ENCODE measurements at regions of chr16 and their contacts with region 1.

Region 1: DNA sequence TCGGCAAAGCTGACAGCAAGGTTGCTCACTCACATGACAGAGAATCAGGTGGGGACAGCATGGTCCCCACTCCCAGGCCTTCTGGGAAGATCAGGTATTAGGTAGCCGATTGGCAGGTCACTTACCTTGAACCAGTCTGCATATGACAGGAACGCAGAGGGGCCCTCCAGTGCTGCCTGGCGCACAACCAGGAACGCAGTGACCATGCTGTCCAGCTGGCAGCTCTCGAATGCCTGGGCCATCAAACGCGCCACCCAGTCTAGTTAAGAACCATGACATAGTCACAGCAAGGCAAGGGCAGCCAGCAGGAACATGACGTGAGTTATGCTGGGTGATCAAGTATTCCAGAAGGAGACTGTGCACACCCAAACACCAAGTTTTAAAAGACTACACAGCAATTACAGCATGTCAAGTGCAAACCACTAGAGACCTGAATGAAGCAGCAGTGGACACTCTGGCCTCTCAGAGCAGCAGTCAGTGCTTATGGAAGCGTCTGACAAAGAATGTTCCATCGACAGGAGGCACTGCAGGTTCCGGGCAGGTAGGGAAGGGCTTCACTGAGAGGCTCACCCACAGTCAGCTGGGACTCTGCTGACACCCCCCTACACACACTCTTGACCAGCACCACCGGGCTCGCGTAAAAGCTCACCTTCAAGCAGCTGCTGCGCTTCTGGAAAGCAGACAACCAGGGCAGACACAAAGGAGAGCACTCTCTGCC is 25.0 kb downstream of the FANCA start:
- DNase-seq: no peak
- ATAC-seq: no peak
- H3K4me3 ChIP-seq: no peak overlapping the region
- H3K27ac ChIP-seq: no peak overlapping the region
- H3K4me1 ChIP-seq: no peaks in the 10 kb centered on the region
- H3K27me3 ChIP-seq: no peaks in the 10 kb centered on the region
- CTCF ChIP-seq: no peak
- EP300 ChIP-seq: no peak
- POLR2A ChIP-seq: no peak
- RAD21 ChIP-seq: no peak

Region 2: GRCh38 chr16:89615596-89616090 is 175.8 kb before region 1 on chr16:
- CTCF ChIA-PET with region 1: no interaction called
- POLR2A ChIA-PET with region 1: no interaction called
- RAD21 ChIA-PET with region 1: no interaction called
- SMC1A ChIA-PET with region 1: no interaction called
- in situ Hi-C with region 1: no loop called
- intact Hi-C with region 1: no loop called
- DNase-seq: no peak
- ATAC-seq: peak; percentile 76
- H3K4me3 ChIP-seq: no peak overlapping the region
- H3K27ac ChIP-seq: no peak overlapping the region
- H3K4me1 ChIP-seq: no peaks in the 10 kb centered on the region
- H3K27me3 ChIP-seq: no peaks in the 10 kb centered on the region
- CTCF ChIP-seq: peak; percentile 39 to 73 (median 53)
- EP300 ChIP-seq: no peak
- POLR2A ChIP-seq: no peak
- RAD21 ChIP-seq: 0 out of 2 replicates have a peak, but pooled peaks have one; percentile 23

Region 3: DNA sequence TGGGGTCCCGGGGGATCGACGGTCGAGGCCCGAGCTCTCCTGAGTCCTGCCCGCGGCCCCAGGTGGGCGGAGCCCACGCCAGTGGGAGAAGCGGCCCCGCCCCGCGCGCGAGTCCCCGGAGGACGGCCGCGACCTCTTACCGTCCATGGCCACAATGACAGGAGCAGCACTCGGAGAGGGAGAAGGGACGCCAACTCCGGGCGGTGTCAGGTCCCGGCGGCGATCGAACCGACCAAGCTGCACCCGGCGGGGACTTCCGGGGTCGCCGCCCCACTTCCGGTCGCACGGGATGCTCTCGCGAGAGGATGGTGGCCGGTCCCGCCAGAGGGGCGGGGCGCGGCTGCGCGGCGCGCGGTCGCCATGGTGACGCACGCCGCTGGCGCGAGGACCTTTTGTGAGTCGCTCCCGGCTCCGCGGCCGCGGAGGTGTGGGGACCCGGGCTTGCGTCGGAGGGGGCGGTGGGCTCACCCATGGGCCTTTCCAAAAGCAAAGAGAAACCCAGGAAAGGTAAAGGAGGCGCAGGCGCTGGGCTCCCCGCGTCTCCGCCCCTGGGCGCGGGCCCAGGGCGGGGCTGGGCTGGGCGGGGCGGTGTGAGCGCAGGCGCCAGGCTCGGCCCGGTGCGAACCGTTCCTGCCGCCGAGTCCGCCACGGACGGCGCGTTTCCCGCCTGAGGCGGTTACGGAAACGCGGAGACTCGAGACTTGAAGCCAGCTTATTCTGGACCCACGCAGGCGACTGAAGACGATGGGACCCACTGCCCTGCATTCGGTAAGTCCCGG is 133.8 kb before region 1 on chr16 and contains the starts of genes CHMP1A and SPATA33:
- CTCF ChIA-PET with region 1: no interaction called
- POLR2A ChIA-PET with region 1: no interaction called
- RAD21 ChIA-PET with region 1: no interaction called
- SMC1A ChIA-PET with region 1: no interaction called
- in situ Hi-C with region 1: no loop called
- intact Hi-C with region 1: no loop called
- DNase-seq: peak; percentile 45
- ATAC-seq: peak; percentile 97
- H3K4me3 ChIP-seq: peak within 1 kb of the TSS; percentile 97
- H3K27ac ChIP-seq: peak within 1 kb of the TSS; percentile 88
- H3K4me1 ChIP-seq: peaks cover 14% of the 10 kb centered on the region
- H3K27me3 ChIP-seq: no peaks in the 10 kb centered on the region
- CTCF ChIP-seq: no peak
- EP300 ChIP-seq: 0 out of 4 replicates have a peak, but pooled peaks of 1 of the 2 experiments have one; percentile 22
- POLR2A ChIP-seq: peak; percentile 98
- RAD21 ChIP-seq: no peak
- polyA plus RNA-seq, gene CHMP1A: 1.0 to 3.8 TPM
- polyA plus RNA-seq, gene SPATA33: 1.1 to 2.9 TPM

Region 4: DNA sequence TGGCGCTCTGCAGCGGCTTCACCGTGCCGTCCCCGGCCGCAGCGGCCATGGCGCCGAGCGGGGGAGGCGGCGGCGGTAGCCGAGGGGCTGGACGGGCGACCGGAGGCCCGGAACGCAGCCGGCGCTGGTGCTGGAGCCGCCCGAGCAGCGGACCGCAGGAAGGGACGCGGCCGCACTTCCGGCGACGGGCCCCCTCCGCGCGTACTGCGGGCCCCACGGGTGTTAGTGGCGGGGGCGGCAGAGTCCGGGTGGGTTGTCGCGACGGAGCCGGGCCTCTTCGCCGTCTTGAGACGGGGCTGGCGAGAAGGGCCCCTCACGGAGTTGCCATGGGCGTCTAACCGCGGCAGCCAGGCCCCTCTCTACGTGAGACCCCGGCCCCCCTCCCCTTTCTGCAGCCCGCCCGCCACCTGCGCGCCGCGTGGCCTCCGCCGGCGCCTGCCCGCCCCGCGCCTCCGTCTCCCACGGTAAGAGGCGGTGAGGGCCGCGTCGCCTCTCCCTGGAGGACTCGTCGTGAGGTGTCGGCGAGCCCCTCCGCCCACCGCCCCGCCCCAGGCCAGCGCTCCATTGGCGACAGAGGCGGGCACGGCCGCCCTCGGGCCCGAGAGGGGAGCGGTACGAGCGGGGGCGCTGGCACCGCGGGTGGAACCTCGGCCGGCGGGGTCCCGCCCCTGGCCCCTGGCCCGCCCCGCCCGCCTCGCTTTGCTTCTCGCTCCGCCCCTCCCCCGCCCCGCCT is 70.5 kb before region 1 on chr16 and contains the starts of genes VPS9D1 and ZNF276:
- CTCF ChIA-PET with region 1: no interaction called
- POLR2A ChIA-PET with region 1: no interaction called
- RAD21 ChIA-PET with region 1: no interaction called
- SMC1A ChIA-PET with region 1: no interaction called
- in situ Hi-C with region 1: no loop called
- intact Hi-C with region 1: no loop called
- DNase-seq: no peak
- ATAC-seq: peak; percentile 78
- H3K4me3 ChIP-seq: peak within 1 kb of the TSS; percentile 93
- H3K27ac ChIP-seq: peak within 1 kb of the TSS; percentile 63
- H3K4me1 ChIP-seq: peaks cover 31% of the 10 kb centered on the region
- H3K27me3 ChIP-seq: no peaks in the 10 kb centered on the region
- CTCF ChIP-seq: no peak
- EP300 ChIP-seq: no peak
- POLR2A ChIP-seq: peak; percentile 81
- RAD21 ChIP-seq: no peak
- polyA plus RNA-seq, gene VPS9D1: 0.85 to 1.1 TPM
- polyA plus RNA-seq, gene ZNF276: 0.27 to 0.93 TPM

Region 5: DNA sequence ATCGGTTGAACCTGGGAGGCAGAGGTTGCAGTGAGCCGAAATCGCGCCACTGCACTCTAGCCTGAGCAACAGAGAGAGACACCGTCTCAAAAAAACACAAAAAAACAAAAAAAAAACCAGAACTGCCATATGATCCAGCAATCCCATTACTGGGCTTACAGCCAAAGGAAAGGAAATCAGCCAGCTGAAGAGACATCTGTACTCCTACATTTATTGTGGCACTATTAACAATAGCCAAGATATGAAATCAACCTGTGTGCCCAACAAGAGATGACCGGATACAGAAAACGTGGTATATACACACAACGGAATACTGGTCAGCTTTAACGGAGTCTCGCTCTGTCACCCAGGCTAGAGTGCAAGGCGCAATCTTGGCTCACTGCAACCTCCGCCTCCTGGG is 10.4 kb after region 1 on chr16:
- CTCF ChIA-PET with region 1: interaction called, 10 read pairs
- POLR2A ChIA-PET with region 1: no interaction called
- RAD21 ChIA-PET with region 1: interaction called, 3 read pairs
- SMC1A ChIA-PET with region 1: no interaction called
- in situ Hi-C with region 1: no loop called
- intact Hi-C with region 1: no loop called
- DNase-seq: no peak
- ATAC-seq: no peak
- H3K4me3 ChIP-seq: no peak overlapping the region
- H3K27ac ChIP-seq: no peak overlapping the region
- H3K4me1 ChIP-seq: no peaks in the 10 kb centered on the region
- H3K27me3 ChIP-seq: no peaks in the 10 kb centered on the region
- CTCF ChIP-seq: no peak
- EP300 ChIP-seq: no peak
- POLR2A ChIP-seq: no peak
- RAD21 ChIP-seq: no peak

Region 6: GRCh38 chr16:89828199-89828778 is 36.9 kb after region 1 on chr16 and contains the start of gene SPIRE2:
- CTCF ChIA-PET with region 1: no interaction called
- POLR2A ChIA-PET with region 1: no interaction called
- RAD21 ChIA-PET with region 1: no interaction called
- SMC1A ChIA-PET with region 1: no interaction called
- in situ Hi-C with region 1: no loop called
- intact Hi-C with region 1: loop called (anchors 1 kb)
- DNase-seq: no peak
- ATAC-seq: peak; percentile 91
- H3K4me3 ChIP-seq: no peak within 1 kb of the TSS
- H3K27ac ChIP-seq: no peak within 1 kb of the TSS
- H3K4me1 ChIP-seq: no peaks in the 10 kb centered on the region
- H3K27me3 ChIP-seq: peaks cover 1 to 3% of the 10 kb centered on the region in 2 experiments; a peak in 3 of 4 replicates
- CTCF ChIP-seq: no peak
- EP300 ChIP-seq: no peak
- POLR2A ChIP-seq: no peak
- RAD21 ChIP-seq: no peak
- polyA plus RNA-seq, gene SPIRE2: 0.03 to 0.18 TPM

Region 7: GRCh38 chr16:90057738-90058173 is 266.3 kb after region 1 on chr16:
- CTCF ChIA-PET with region 1: no interaction called
- POLR2A ChIA-PET with region 1: no interaction called
- RAD21 ChIA-PET with region 1: no interaction called
- SMC1A ChIA-PET with region 1: no interaction called
- in situ Hi-C with region 1: no loop called
- intact Hi-C with region 1: no loop called
- DNase-seq: no peak
- ATAC-seq: no peak
- H3K4me3 ChIP-seq: no peak overlapping the region
- H3K27ac ChIP-seq: no peak overlapping the region
- H3K4me1 ChIP-seq: no peaks in the 10 kb centered on the region
- H3K27me3 ChIP-seq: no peaks in the 10 kb centered on the region; a peak in 1 of 4 replicates
- CTCF ChIP-seq: no peak
- EP300 ChIP-seq: no peak
- POLR2A ChIP-seq: no peak
- RAD21 ChIP-seq: no peak